ENCODE measurements at regions of chr9 and their contacts with region 1.

Region 1: GRCh38 chr9:132910376-132910775 is 31.7 kb downstream of the SPACA9 start:
- DNase-seq: no peak
- H3K4me3 ChIP-seq: no peak overlapping the region
- H3K27ac ChIP-seq: no peak overlapping the region
- H3K4me1 ChIP-seq: no peaks in the 10 kb centered on the region
- H3K27me3 ChIP-seq: no peaks in the 10 kb centered on the region
- CTCF ChIP-seq: no peak

Region 2: GRCh38 chr9:132663117-132663516 is 247.3 kb before region 1 on chr9:
- CTCF ChIA-PET with region 1: interaction called, 16 read pairs
- dilution Hi-C with region 1: no loop called
- in situ Hi-C with region 1: no loop called
- intact Hi-C with region 1: no loop called
- DNase-seq: no peak
- H3K4me3 ChIP-seq: no peak overlapping the region
- H3K27ac ChIP-seq: no peak overlapping the region
- H3K4me1 ChIP-seq: peaks cover 14% of the 10 kb centered on the region
- H3K27me3 ChIP-seq: no peaks in the 10 kb centered on the region
- CTCF ChIP-seq: no peak

Region 3: GRCh38 chr9:132840980-132841379 is 69.4 kb before region 1 on chr9:
- CTCF ChIA-PET with region 1: no interaction called
- dilution Hi-C with region 1: no loop called
- in situ Hi-C with region 1: no loop called
- intact Hi-C with region 1: no loop called
- DNase-seq: no peak
- H3K4me3 ChIP-seq: no peak overlapping the region
- H3K27ac ChIP-seq: no peak overlapping the region
- H3K4me1 ChIP-seq: no peaks in the 10 kb centered on the region
- H3K27me3 ChIP-seq: no peaks in the 10 kb centered on the region
- CTCF ChIP-seq: no peak